ENCODE measurements at regions of chr6 and their contacts with region 1.

Region 1: GRCh38 chr6:69732640-69733039 is 64.2 kb downstream of the LMBRD1 start:
- DNase-seq: peak; percentile 13
- ATAC-seq: no peak
- H3K4me3 ChIP-seq: no peak overlapping the region
- H3K27ac ChIP-seq: no peak overlapping the region
- H3K4me1 ChIP-seq: no peaks in the 10 kb centered on the region
- H3K27me3 ChIP-seq: no peaks in the 10 kb centered on the region
- CTCF ChIP-seq: peak; percentile 29; the same call in 1 of the 2 replicates

Region 2: GRCh38 chr6:70166088-70166958 is 433.7 kb after region 1 on chr6:
- CTCF ChIA-PET with region 1: no interaction called
- POLR2A ChIA-PET with region 1: no interaction called
- in situ Hi-C with region 1: no loop called
- intact Hi-C with region 1: loop called (anchors 5 kb)
- DNase-seq: peak; percentile 35
- ATAC-seq: peak; percentile 95
- H3K4me3 ChIP-seq: no peak overlapping the region; a peak in 1 of 4 replicates
- H3K27ac ChIP-seq: no peak overlapping the region
- H3K4me1 ChIP-seq: 0 out of 2 replicates have a peak, but pooled peaks cover 3% of the 10 kb centered on the region
- H3K27me3 ChIP-seq: peaks cover 15% of the 10 kb centered on the region
- CTCF ChIP-seq: peak; percentile 92